Activated T-helper 2 cell treated with anti-CD3 and anti-CD28 coated beads, Interferon-gamma antibody, Interleukin-2, Interleukin-4, amounts not matched to agents 10 μg/mL and 5 μg/mL and 100 μg/mL, durations not matched to agents 14 hours and 24 hours and 36 hours (primary cell): ENCODE measurements at regions of chr19 and their contacts with region 1.

Region 1: DNA sequence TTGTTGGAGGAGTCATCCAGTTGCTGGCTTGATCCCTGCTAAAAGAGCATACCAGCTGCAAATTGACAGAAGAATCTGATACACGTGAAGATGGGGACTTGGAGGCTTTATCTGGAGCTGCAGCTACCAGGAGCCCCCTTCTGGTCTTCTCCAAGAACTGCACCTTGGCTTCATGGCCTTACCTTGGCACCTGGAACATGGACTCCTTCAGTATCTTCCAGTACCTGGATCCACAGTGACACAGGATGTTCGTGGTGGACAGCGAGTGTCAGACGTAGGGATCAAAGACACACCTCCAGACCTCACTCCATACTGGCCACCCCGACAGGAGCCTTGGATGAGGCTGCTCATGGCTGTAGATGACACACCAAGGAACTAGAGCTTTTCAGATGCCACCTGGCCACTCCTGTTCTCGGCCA is 9.9 kb upstream of the ACSBG2 start:
- DNase-seq: peak; percentile 50
- H3K4me3 Mint-ChIP-seq: no peak overlapping the region
- H3K27ac Mint-ChIP-seq: no peak overlapping the region
- H3K4me1 Mint-ChIP-seq: peaks cover 4% of the 10 kb centered on the region
- H3K27me3 Mint-ChIP-seq: no peaks in the 10 kb centered on the region

Region 2: GRCh38 chr19:5987077-5987818 is 138.3 kb before region 1 on chr19:
- intact Hi-C with region 1: loop called (anchors 5 kb)
- DNase-seq: peak; percentile 59
- H3K4me3 Mint-ChIP-seq: peak overlapping the region; percentile 57
- H3K27ac Mint-ChIP-seq: no peak overlapping the region
- H3K4me1 Mint-ChIP-seq: peaks cover 39% of the 10 kb centered on the region
- H3K27me3 Mint-ChIP-seq: no peaks in the 10 kb centered on the region

Region 3: GRCh38 chr19:6048808-6049405 is 76.7 kb before region 1 on chr19:
- intact Hi-C with region 1: loop called (anchors 1 kb)
- DNase-seq: peak; percentile 65
- H3K4me3 Mint-ChIP-seq: no peak overlapping the region
- H3K27ac Mint-ChIP-seq: no peak overlapping the region
- H3K4me1 Mint-ChIP-seq: peaks cover 8% of the 10 kb centered on the region
- H3K27me3 Mint-ChIP-seq: peaks cover 5% of the 10 kb centered on the region